Ovary (tissue), 10 donors: ENCODE measurements at regions of chr16 and their contacts with region 1.

Region 1: GRCh38 chr16:73496616-73497015 is 448.7 kb upstream of the ZFHX3 start:
- DNase-seq: no peak
- H3K4me3 ChIP-seq: no peak overlapping the region
- H3K27ac ChIP-seq: no peak overlapping the region
- H3K4me1 ChIP-seq: no peaks in the 10 kb centered on the region
- H3K27me3 ChIP-seq: no peaks in the 10 kb centered on the region
- CTCF ChIP-seq: no peak
- EP300 ChIP-seq: no peak
- POLR2A ChIP-seq: no peak

Region 2: GRCh38 chr16:73113336-73113735 is 383.3 kb before region 1 on chr16:
- intact Hi-C with region 1: no loop called
- DNase-seq: no peak
- H3K4me3 ChIP-seq: no peak overlapping the region
- H3K27ac ChIP-seq: no peak overlapping the region
- H3K4me1 ChIP-seq: no peaks in the 10 kb centered on the region
- H3K27me3 ChIP-seq: no peaks in the 10 kb centered on the region
- CTCF ChIP-seq: no peak
- EP300 ChIP-seq: no peak
- POLR2A ChIP-seq: no peak

Region 3: DNA sequence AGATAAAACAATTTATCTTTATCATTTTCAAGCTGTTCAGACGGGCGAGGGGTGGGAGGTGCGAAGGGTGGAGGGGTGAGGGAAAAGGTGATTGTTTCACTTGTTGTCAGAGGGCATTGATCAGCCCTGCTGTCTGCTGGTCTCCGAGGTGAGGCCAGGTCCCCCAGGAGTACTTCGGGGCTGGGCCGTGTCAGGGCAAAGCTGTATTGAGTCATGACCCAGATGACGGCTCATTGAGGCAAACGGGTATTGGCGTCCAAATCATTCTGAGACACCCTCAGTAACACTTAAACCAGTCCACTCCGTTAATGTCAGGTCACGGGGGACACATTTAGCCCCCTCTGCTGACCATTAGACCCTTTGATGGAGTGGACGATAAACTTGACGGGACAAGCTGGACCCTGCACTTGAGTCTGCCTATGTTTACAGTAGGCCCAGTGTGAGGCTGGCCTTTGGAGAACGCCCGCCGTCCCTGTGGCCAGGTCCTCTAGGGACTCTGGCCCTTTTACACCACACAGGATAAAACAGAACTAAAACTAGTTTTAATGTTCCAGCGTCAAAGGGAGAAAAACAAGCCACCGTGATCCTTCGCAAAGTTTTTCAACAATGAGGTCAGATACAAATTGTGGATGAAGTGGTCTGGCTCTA is 53.5 kb after region 1 on chr16:
- intact Hi-C with region 1: loop called in 1 of 4 experiments (anchors 10 kb)
- DNase-seq: no peak
- H3K4me3 ChIP-seq: no peak overlapping the region
- H3K27ac ChIP-seq: no peak overlapping the region
- H3K4me1 ChIP-seq: no peaks in the 10 kb centered on the region
- H3K27me3 ChIP-seq: no peaks in the 10 kb centered on the region
- CTCF ChIP-seq: no peak
- EP300 ChIP-seq: no peak
- POLR2A ChIP-seq: no peak